Activated CD8-positive, alpha-beta memory T cell treated with anti-CD3 and anti-CD28 coated beads, Interleukin-2, amount 10 ng/mL, durations not matched to agents 7 days and 5 days (primary cell): ENCODE measurements at regions of chr21 and their contacts with region 1.

Region 1: DNA sequence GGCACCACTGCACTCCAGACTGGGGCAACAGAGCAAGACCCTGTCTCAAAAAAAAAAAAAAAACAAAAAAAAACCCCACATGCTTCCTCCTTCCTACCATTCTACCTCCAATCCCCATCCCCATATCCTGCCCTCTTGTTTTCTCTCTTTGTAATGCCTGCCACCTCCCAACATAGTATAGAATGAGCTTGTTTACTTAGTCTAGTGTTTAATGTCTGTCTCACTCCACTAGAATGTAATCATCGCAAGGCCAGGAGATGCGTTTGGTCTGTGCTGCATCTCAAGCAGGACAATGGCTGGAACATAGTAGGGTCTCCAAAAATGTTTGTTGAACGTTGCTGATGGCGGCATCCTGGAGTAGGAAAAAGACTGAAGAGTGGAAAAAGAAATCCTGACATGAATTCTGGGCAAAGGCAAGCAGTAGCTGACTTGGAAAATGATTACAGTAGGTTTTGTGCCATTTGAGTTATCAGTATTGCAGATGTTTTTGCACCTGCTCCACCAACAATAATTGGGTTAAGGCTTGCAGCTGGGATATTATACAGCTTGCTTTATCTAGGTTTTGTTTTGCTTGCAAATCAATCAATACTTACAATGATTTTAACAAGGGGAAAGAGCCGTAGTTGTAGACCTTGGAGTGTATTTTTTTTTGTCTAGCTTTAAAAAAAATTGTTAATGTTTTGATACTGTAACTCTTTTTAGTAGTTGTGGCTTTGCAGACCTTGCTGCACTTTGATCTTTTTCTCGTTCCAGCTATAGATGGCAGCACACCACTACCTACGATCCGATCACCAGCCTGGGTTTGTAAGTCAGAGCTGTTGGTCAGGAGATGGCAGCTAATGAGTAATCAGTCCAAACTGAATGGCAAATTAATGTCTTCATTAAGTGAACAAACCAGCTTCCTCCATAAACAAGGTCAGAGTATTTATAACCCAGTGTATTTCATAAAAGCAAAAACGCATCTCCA is 62.4 kb downstream of the BACH1 start:
- DNase-seq: no peak
- ATAC-seq: no peak
- H3K4me3 Mint-ChIP-seq: no peak overlapping the region
- H3K27ac Mint-ChIP-seq: no peak overlapping the region
- H3K4me1 Mint-ChIP-seq: peaks cover 3% of the 10 kb centered on the region
- H3K27me3 Mint-ChIP-seq: no peaks in the 10 kb centered on the region

Region 2: GRCh38 chr21:29265690-29266479 is 95.2 kb before region 1 on chr21:
- CTCF ChIA-PET with region 1: no interaction called
- DNase-seq: no peak
- ATAC-seq: no peak
- H3K4me3 Mint-ChIP-seq: no peak overlapping the region
- H3K27ac Mint-ChIP-seq: no peak overlapping the region
- H3K4me1 Mint-ChIP-seq: no peaks in the 10 kb centered on the region
- H3K27me3 Mint-ChIP-seq: peaks cover 28% of the 10 kb centered on the region

Region 3: GRCh38 chr21:29343519-29343918 is 17.6 kb before region 1 on chr21:
- CTCF ChIA-PET with region 1: interaction called, 11 read pairs
- DNase-seq: no peak
- ATAC-seq: no peak
- H3K4me3 Mint-ChIP-seq: no peak overlapping the region
- H3K27ac Mint-ChIP-seq: no peak overlapping the region
- H3K4me1 Mint-ChIP-seq: peaks cover 36% of the 10 kb centered on the region
- H3K27me3 Mint-ChIP-seq: no peaks in the 10 kb centered on the region